GM23248 (cell line): ENCODE measurements at regions of chr14 and their contacts with region 1.

Region 1: DNA sequence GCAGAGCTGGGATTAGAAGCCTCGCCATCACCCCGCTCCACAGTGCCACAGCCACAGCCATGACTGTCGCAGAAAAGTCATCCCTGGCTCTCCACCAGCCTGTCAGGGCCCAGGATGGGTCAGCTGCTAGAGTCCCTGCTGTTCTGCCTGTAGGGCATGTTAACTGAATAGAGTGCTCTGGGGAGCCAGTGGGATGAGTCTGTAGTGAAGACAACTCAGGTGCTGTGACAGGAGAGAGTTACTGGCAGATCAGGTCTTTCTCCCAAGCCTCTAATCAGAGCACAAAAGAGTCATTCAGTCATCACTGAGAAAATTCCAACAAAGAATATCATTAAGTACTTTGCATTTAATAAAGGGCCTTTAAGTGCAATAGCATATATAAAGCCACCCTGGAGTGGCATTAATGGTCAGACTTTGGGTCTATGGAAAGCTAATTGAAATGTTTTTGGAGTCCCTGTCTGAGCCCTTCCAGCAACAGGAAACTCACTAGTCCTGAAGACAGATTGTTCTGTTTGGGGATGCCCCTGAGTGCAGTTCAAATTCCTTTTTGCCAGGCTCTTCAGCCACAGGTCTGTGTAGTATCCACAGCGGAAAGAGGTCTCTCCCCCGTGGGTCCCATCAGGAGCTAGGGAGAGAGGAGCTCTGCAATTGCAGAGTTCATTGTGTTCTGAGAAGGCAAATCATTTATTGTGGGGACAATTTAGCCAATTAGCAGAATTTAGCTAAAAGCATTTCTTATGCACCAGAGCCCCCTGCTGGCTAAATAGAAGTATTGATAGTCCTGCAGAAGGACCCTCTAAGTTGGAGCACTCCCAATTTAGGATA is 45.2 kb upstream of the C14orf132 start:
- DNase-seq: peak; percentile 76
- H3K4me3 ChIP-seq: no peak overlapping the region
- H3K27ac ChIP-seq: no peak overlapping the region
- H3K4me1 ChIP-seq: no peaks in the 10 kb centered on the region
- H3K27me3 ChIP-seq: peaks cover 19% of the 10 kb centered on the region

Region 2: DNA sequence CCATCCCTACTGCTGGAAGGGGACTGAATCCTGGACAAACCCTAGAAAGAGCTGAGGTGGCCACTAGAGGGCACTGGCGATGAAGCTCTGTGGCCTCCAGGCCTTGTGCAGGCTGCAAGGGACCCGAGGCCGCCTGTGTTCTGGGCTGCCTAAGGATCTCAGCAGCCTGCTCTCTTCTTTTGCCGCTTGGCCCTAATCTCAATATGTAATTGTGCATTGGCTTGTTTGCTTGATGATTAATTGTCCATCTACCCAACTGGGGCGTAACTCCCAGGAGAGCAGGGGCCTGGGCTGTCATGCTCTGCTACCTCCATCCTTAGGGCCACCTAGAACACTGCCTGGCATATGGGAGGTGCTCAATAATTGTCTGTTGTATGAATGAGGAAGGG is 551.4 kb before region 1 on chr14:
- in situ Hi-C with region 1: loop called (anchors 25 kb)
- DNase-seq: peak; percentile 83
- H3K4me3 ChIP-seq: no peak overlapping the region
- H3K27ac ChIP-seq: no peak overlapping the region
- H3K4me1 ChIP-seq: no peaks in the 10 kb centered on the region
- H3K27me3 ChIP-seq: no peaks in the 10 kb centered on the region

Region 3: GRCh38 chr14:95561001-95561412 is 433.0 kb before region 1 on chr14:
- in situ Hi-C with region 1: loop called (anchors 25 kb)
- DNase-seq: peak; percentile 80
- H3K4me3 ChIP-seq: no peak overlapping the region
- H3K27ac ChIP-seq: no peak overlapping the region
- H3K4me1 ChIP-seq: no peaks in the 10 kb centered on the region
- H3K27me3 ChIP-seq: no peaks in the 10 kb centered on the region; the same call in 1 of the 2 replicates

Region 4: GRCh38 chr14:95623195-95623594 is 370.8 kb before region 1 on chr14:
- in situ Hi-C with region 1: no loop called
- DNase-seq: peak; percentile 19
- H3K4me3 ChIP-seq: no peak overlapping the region
- H3K27ac ChIP-seq: no peak overlapping the region
- H3K4me1 ChIP-seq: no peaks in the 10 kb centered on the region
- H3K27me3 ChIP-seq: no peaks in the 10 kb centered on the region

Region 5: GRCh38 chr14:96136352-96137005 is 142.5 kb after region 1 on chr14:
- in situ Hi-C with region 1: no loop called
- DNase-seq: peak; percentile 58
- H3K4me3 ChIP-seq: no peak overlapping the region
- H3K27ac ChIP-seq: no peak overlapping the region; the same call in 1 of the 2 replicates
- H3K4me1 ChIP-seq: peaks cover 18% of the 10 kb centered on the region
- H3K27me3 ChIP-seq: no peaks in the 10 kb centered on the region

Region 6: GRCh38 chr14:96176811-96177603 is 183.0 kb after region 1 on chr14:
- in situ Hi-C with region 1: no loop called
- DNase-seq: peak; percentile 93
- H3K4me3 ChIP-seq: 0 out of 2 replicates have a peak overlapping the region, but pooled peaks have one; percentile 9
- H3K27ac ChIP-seq: peak overlapping the region; percentile 81
- H3K4me1 ChIP-seq: peaks cover 32% of the 10 kb centered on the region
- H3K27me3 ChIP-seq: no peaks in the 10 kb centered on the region

Region 7: GRCh38 chr14:96189281-96189711 is 195.3 kb after region 1 on chr14:
- in situ Hi-C with region 1: no loop called
- DNase-seq: peak; percentile 70
- H3K4me3 ChIP-seq: no peak overlapping the region
- H3K27ac ChIP-seq: no peak overlapping the region
- H3K4me1 ChIP-seq: 0 out of 2 replicates have a peak, but pooled peaks cover 7% of the 10 kb centered on the region
- H3K27me3 ChIP-seq: no peaks in the 10 kb centered on the region

Region 8: GRCh38 chr14:96275177-96276112 is 281.5 kb after region 1 on chr14:
- in situ Hi-C with region 1: loop called (anchors 10 kb)
- DNase-seq: peak; percentile 83
- H3K4me3 ChIP-seq: no peak overlapping the region
- H3K27ac ChIP-seq: peak overlapping the region; percentile 77
- H3K4me1 ChIP-seq: peaks cover 25% of the 10 kb centered on the region
- H3K27me3 ChIP-seq: no peaks in the 10 kb centered on the region